ENCODE measurements at regions of chr2 and their contacts with region 1.

Region 1: GRCh38 chr2:182077451-182078142 is 91.9 kb downstream of the PPP1R1C start:
- DNase-seq: peak in 1 of 2 donors; percentile 4
- ATAC-seq: peak; percentile 61 to 69
- H3K4me3 ChIP-seq: no peak overlapping the region
- H3K27ac ChIP-seq: no peak overlapping the region
- H3K4me1 ChIP-seq: peaks cover 0 to 4% of the 10 kb centered on the region in 2 donors
- H3K27me3 ChIP-seq: no peaks in the 10 kb centered on the region
- CTCF ChIP-seq: peak; percentile 21 to 63 (median 58)
- POLR2A ChIP-seq: no peak

Region 2: DNA sequence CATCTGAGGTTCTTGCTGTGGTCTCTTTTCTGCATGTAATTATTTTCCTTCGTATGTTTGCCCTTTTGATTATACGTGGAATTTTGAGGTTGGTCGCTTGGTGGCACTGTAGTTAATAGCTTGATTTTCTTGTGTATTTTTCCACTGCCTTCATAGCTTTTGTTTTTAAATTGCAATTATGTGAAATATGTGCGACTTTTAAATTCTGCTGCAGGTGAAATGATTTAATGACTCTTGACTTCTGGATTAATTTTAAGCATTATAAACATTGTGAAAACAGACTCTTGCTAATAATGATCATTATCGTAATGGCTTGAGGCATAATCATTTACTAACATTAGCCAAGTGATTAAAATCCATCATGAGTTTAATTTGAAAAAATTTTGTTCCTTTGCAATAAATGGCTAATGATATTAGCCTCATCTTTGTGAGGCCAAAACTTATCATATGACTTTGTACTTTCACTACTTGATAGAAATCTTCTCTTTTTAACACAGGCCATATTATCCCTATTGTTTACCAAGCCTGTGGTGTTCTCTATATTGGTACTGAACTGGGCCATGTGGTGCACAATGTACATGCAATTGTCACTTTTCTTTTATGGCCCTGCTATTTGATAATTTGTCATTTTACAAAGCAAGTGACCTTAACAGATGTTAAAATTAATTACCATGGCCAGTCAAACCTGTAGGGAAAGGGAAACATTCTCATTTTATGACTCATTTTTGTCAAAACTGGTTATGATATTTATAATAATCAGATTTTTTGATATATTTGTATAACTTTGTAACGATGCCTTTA is 334.5 kb before region 1 on chr2:
- in situ Hi-C with region 1: loop called in 3 of 4 experiments (anchors 10 kb)
- intact Hi-C with region 1: loop called (anchors 2 kb)
- DNase-seq: no peak
- ATAC-seq: no peak
- H3K4me3 ChIP-seq: no peak overlapping the region
- H3K27ac ChIP-seq: no peak overlapping the region
- H3K4me1 ChIP-seq: peaks cover 0 to 2% of the 10 kb centered on the region in 2 donors
- H3K27me3 ChIP-seq: no peaks in the 10 kb centered on the region
- CTCF ChIP-seq: peak; percentile 24 to 62 (median 52)
- POLR2A ChIP-seq: no peak

Region 3: GRCh38 chr2:181752301-181752700 is 325.3 kb before region 1 on chr2:
- in situ Hi-C with region 1: loop called (anchors 10 kb)
- intact Hi-C with region 1: no loop called
- DNase-seq: no peak
- ATAC-seq: no peak
- H3K4me3 ChIP-seq: no peak overlapping the region
- H3K27ac ChIP-seq: no peak overlapping the region
- H3K4me1 ChIP-seq: no peaks in the 10 kb centered on the region
- H3K27me3 ChIP-seq: no peaks in the 10 kb centered on the region
- CTCF ChIP-seq: no peak
- POLR2A ChIP-seq: no peak

Region 4: DNA sequence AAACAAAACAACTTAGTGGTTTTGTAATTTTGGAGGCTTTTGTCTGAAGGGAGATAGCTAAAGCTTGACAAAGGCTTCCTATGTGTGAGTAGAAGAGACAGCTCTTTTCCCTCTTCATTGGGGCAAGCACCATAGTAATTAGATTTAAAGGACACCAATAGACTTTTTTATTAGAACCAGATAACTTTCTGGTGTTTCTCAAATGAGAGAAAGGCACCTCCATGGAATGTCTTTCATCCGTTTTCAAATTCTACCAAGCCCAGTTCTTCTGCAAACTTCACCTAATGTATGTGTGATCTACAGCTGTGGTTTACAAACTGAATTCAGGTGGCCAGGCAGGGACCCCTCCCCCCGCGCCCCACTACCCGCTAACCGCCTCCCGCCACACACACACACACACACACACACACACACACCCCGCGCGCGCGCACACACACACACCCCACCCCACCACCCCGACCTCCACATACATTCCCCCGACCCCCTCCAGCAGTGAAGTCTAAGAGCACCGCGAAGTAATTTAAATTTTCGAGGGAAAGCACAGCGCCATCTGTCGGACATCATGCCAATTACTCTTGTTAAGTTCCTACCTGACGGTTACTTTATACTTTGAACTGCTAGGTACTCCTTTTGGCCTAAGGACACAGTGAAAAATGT is 123.6 kb before region 1 on chr2:
- in situ Hi-C with region 1: no loop called
- intact Hi-C with region 1: loop called (anchors 5 kb)
- DNase-seq: peak in 1 of 2 donors; percentile 28
- ATAC-seq: peak in 1 of 2 donors; percentile 81
- H3K4me3 ChIP-seq: peak overlapping the region; percentile 37 to 51 (median 47)
- H3K27ac ChIP-seq: no peak overlapping the region
- H3K4me1 ChIP-seq: peaks cover 0 to 5% of the 10 kb centered on the region in 2 donors
- H3K27me3 ChIP-seq: no peaks in the 10 kb centered on the region
- CTCF ChIP-seq: peak; percentile 20 to 74 (median 43)
- POLR2A ChIP-seq: no peak

Region 5: GRCh38 chr2:181970160-181970794 is 107.3 kb before region 1 on chr2:
- in situ Hi-C with region 1: no loop called
- intact Hi-C with region 1: loop called (anchors 5 kb)
- DNase-seq: no peak
- ATAC-seq: no peak
- H3K4me3 ChIP-seq: no peak overlapping the region
- H3K27ac ChIP-seq: no peak overlapping the region
- H3K4me1 ChIP-seq: no peaks in the 10 kb centered on the region
- H3K27me3 ChIP-seq: no peaks in the 10 kb centered on the region
- CTCF ChIP-seq: peak in 1 of 5 experiments; percentile 17
- POLR2A ChIP-seq: no peak